ENCODE measurements at regions of chr1 and their contacts with region 1.

Region 1: GRCh38 chr1:67500413-67500959 is 70.3 kb upstream of the SERBP1 start:
- DNase-seq: peak; percentile 95
- H3K4me3 Mint-ChIP-seq: peak overlapping the region; percentile 16
- H3K27ac Mint-ChIP-seq: no peak overlapping the region
- H3K4me1 Mint-ChIP-seq: peaks cover 10% of the 10 kb centered on the region
- H3K27me3 Mint-ChIP-seq: no peaks in the 10 kb centered on the region

Region 2: DNA sequence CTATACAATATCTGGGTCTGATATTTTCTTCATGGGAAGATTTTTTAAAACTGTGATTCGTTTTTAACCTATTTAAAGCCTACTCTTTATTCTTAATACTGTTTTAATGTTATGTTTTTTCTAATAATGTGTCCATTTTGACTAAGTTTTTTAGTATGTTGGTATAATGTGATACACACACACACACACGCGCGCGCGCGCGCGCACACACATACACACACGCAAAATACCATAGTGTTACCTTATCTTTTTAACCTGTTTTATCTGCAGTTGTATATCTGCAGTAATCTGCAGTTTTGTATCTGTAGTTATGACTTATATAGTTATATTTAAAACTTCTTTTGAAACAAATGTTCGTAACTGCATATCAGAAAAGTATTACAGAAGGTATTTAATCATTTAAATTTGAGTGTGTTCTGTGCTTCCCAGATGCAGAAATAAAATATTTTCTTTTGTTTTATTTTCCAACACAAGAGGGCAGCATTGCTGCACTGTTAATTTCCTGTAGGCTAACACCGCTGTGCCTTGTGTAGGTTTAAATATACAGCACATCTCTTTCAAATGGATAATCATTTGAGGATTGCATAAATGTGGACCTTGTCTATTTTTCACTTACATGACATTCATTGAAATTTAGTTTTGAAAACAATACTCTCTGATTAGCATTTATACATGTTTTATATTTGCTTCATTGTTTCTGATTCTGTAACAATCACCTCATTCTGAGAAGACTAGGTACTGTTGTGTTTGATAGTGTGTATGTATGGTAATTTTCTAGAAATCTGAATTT is 1541.7 kb before region 1 on chr1:
- CTCF ChIA-PET with region 1: no interaction called
- intact Hi-C with region 1: loop called (anchors 5 kb)
- DNase-seq: peak; percentile 27
- H3K4me3 Mint-ChIP-seq: no peak overlapping the region
- H3K27ac Mint-ChIP-seq: no peak overlapping the region
- H3K4me1 Mint-ChIP-seq: no peaks in the 10 kb centered on the region
- H3K27me3 Mint-ChIP-seq: no peaks in the 10 kb centered on the region

Region 3: GRCh38 chr1:67053785-67054772 is 446.4 kb before region 1 on chr1 and contains the start of gene SLC35D1:
- CTCF ChIA-PET with region 1: no interaction called
- intact Hi-C with region 1: loop called (anchors 2 kb)
- DNase-seq: peak; percentile 81
- H3K4me3 Mint-ChIP-seq: peak within 1 kb of the TSS; percentile 82
- H3K27ac Mint-ChIP-seq: peak within 1 kb of the TSS; percentile 93
- H3K4me1 Mint-ChIP-seq: peaks cover 19% of the 10 kb centered on the region
- H3K27me3 Mint-ChIP-seq: no peaks in the 10 kb centered on the region
- total RNA-seq, gene SLC35D1: 10.5 to 11.1 TPM

Region 4: DNA sequence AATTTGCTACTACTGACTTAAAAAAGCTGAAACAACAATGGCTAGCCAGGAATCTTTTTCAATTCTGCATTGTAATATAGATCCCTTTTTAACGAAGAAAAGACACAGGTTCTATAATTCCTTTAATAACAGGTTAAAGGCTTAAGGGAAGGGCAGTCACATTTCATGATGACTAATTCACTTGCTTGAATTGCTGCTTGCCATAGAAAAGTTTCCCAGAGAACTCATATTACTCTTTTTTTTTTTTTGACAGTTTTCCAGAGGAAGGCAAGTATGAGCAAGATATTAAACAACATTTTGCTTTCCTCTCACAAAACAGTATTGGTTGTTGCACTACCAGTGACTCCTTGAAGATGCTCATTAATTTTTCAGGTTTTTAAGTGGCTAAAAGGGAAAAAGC is 273.3 kb before region 1 on chr1:
- CTCF ChIA-PET with region 1: interaction called, 15 read pairs
- intact Hi-C with region 1: no loop called
- DNase-seq: no peak
- H3K4me3 Mint-ChIP-seq: no peak overlapping the region
- H3K27ac Mint-ChIP-seq: no peak overlapping the region
- H3K4me1 Mint-ChIP-seq: peaks cover 28% of the 10 kb centered on the region
- H3K27me3 Mint-ChIP-seq: no peaks in the 10 kb centered on the region

Region 5: DNA sequence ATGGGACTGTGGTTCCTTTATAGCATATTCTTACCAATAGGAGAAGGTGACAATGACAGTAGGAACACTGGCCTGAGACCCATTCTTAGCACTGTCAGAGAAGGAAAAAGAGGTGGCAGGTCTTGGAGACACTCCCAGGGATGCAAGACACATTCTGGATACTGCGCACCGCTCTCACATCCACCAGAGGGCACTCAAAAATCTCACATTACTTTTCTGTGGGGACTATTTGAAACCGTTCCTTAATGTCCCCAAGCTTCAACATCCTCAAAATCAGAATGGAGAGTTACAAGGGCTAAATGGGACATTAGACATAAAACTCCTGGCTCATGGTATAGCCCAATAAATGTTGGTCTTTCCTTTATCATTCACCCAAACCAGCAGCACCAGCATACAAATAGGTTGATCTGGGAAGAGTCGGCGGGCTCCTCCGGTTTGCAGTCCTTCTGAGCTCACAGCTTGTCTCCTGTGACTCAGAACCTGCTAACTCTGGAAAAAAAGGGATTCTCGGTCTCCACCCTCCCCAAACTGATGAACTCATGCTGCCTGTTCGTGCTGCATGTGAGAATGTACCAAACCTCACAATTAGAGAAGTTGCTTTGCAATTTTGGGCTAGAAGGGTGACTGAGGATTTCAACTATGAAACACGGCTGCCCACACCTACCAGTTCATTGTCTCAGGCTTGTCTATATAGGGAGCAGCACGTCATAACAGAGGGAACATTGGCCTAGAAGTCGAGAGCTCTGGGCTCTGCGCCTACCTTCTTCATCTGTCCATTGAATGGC is 152.6 kb before region 1 on chr1:
- CTCF ChIA-PET with region 1: interaction called, 9 read pairs
- intact Hi-C with region 1: loop called (anchors 1 kb)
- DNase-seq: peak; percentile 48
- H3K4me3 Mint-ChIP-seq: no peak overlapping the region
- H3K27ac Mint-ChIP-seq: peak overlapping the region; percentile 10
- H3K4me1 Mint-ChIP-seq: peaks cover 31% of the 10 kb centered on the region
- H3K27me3 Mint-ChIP-seq: no peaks in the 10 kb centered on the region

Region 6: DNA sequence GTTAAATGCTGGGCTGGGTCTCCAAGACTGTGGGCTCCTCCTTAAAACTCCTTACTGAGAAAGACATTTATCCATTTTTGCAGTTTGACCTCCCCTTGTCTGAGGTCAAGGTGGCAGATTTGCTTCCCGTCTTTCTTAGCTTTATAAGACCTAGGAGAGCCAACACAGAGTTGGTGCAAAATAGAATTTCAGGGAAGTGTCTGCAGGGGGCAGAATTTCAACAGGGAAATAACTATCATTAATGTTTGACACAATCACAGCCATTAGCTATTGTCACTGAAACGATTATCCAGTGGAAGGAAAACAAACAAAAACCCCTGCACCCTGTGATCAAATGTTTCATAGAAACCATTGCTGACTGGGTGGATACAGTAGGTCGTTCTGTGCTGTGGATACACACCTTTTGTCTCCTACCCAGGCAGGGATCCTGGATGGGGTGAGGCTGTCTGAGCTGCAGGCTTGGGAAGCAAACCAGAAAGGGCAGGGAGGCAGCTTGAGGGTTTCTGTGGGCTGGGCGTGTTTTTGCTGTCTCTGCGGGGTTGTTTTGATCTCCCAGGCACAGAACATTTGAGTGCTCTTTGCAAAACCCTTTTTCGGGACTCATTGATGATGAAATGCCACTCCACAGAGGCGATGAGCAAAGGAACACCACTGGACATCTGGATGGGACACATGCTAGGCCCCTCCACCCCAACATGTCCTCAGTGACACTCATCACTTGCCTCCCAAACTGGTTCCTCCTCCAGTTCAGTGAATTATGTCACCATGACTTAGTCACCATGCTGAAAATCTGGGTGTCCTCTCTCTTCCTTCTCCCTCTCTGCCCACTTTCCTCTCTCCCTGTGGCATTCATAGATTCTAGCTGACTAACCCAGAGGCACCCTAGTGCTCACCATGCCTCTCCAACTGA is 23.9 kb after region 1 on chr1:
- CTCF ChIA-PET with region 1: interaction called, 13 read pairs
- intact Hi-C with region 1: no loop called
- DNase-seq: no peak
- H3K4me3 Mint-ChIP-seq: no peak overlapping the region
- H3K27ac Mint-ChIP-seq: no peak overlapping the region
- H3K4me1 Mint-ChIP-seq: no peaks in the 10 kb centered on the region
- H3K27me3 Mint-ChIP-seq: peaks cover 6% of the 10 kb centered on the region

Region 7: GRCh38 chr1:67570473-67571143 is 70.1 kb after region 1 on chr1:
- CTCF ChIA-PET with region 1: no interaction called
- intact Hi-C with region 1: no loop called
- DNase-seq: no peak
- H3K4me3 Mint-ChIP-seq: no peak overlapping the region
- H3K27ac Mint-ChIP-seq: no peak overlapping the region
- H3K4me1 Mint-ChIP-seq: no peaks in the 10 kb centered on the region
- H3K27me3 Mint-ChIP-seq: no peaks in the 10 kb centered on the region